AG04450 (cell line): ENCODE measurements at regions of chrX and their contacts with region 1.

Region 1: GRCh38 chrX:81377329-81377728 is 175.4 kb downstream of the SH3BGRL start:
- DNase-seq: peak; percentile 1
- H3K4me3 ChIP-seq: no peak overlapping the region
- H3K27ac ChIP-seq: no peak overlapping the region
- H3K27me3 ChIP-seq: no peaks in the 10 kb centered on the region
- CTCF ChIP-seq: peak; percentile 53

Region 2: DNA sequence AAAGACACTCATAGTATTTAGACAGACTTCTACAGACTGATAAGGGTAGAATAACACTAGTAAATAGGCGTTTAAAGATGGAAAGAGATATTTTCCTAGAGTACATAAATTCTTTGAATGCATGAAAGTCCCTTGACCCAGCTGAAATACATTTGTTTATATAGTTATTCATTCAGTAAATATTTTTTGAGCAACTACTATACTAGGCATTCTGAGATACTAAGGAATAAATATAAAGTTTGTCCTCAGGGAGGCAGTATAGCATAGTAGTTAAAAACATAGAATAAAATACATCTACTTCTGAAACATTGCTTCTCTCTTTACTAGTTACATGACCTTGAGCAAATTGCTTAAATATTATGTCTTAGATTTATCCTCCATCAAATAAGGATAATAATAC is 203.0 kb before region 1 on chrX:
- CTCF ChIA-PET with region 1: interaction called, 29 read pairs
- POLR2A ChIA-PET with region 1: no interaction called
- DNase-seq: no peak
- H3K4me3 ChIP-seq: no peak overlapping the region
- H3K27ac ChIP-seq: no peak overlapping the region
- H3K27me3 ChIP-seq: no peaks in the 10 kb centered on the region
- CTCF ChIP-seq: peak; percentile 15; the same call in 1 of the 2 replicates

Region 3: DNA sequence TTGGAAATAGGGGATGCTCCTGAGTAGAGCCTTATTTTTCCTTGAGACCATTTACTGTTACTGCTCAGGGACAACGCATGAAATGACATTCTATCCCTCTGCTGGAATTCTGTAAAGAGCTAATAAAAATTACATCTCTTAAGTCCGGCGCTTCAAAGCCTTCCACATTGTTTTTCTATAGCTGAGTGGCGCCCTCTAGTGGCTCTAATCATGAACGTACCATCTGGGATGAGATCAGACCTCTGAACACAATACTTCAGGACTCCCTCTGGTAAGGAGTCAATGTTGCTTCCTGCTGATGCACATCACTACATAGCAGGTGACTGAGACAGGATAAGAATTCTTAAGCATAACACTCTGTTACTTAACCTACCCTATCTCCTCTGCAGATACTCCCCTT is 181.6 kb before region 1 on chrX:
- CTCF ChIA-PET with region 1: interaction called, 13 read pairs
- POLR2A ChIA-PET with region 1: no interaction called
- DNase-seq: no peak
- H3K4me3 ChIP-seq: no peak overlapping the region
- H3K27ac ChIP-seq: no peak overlapping the region
- H3K27me3 ChIP-seq: no peaks in the 10 kb centered on the region
- CTCF ChIP-seq: peak; percentile 51

Region 4: GRCh38 chrX:81336455-81337152 is 40.7 kb before region 1 on chrX:
- CTCF ChIA-PET with region 1: no interaction called
- POLR2A ChIA-PET with region 1: no interaction called
- DNase-seq: no peak
- H3K4me3 ChIP-seq: no peak overlapping the region
- H3K27ac ChIP-seq: peak overlapping the region; percentile 39
- H3K27me3 ChIP-seq: no peaks in the 10 kb centered on the region
- CTCF ChIP-seq: no peak

Region 5: DNA sequence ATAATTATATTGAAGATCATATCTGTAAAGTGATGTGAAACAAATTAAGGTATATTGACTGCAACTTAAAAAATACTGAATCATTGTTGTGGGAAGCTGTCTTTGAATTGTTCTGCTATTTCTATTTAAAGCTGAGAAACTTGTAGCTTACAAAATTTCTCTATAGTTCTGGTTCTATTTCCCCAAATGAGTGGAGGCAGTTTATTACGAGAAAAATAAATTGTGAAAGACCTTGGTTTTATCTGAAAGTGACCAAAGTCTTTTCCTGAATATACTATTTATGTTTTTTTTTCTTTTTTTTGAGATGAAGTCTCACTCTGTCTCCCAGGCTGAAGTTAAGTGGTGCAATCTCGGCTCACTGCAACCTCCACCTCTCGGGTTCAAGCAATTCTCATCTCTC is 10.0 kb before region 1 on chrX:
- CTCF ChIA-PET with region 1: interaction called, 11 read pairs
- POLR2A ChIA-PET with region 1: no interaction called
- DNase-seq: no peak
- H3K4me3 ChIP-seq: no peak overlapping the region
- H3K27ac ChIP-seq: no peak overlapping the region
- H3K27me3 ChIP-seq: no peaks in the 10 kb centered on the region
- CTCF ChIP-seq: no peak

Region 6: GRCh38 chrX:81414630-81415029 is 37.3 kb after region 1 on chrX:
- CTCF ChIA-PET with region 1: interaction called, 11 read pairs
- POLR2A ChIA-PET with region 1: no interaction called
- DNase-seq: no peak
- H3K4me3 ChIP-seq: no peak overlapping the region
- H3K27ac ChIP-seq: no peak overlapping the region
- H3K27me3 ChIP-seq: no peaks in the 10 kb centered on the region
- CTCF ChIP-seq: peak; percentile 34